Gastrocnemius medialis (tissue), 4 donors: ENCODE measurements at regions of chr9 and their contacts with region 1.

Region 1: GRCh38 chr9:124932333-124932732 is 8.6 kb downstream of the GOLGA1 start:
- DNase-seq: no peak
- ATAC-seq: no peak
- H3K4me3 ChIP-seq: no peak overlapping the region
- H3K27ac ChIP-seq: no peak overlapping the region
- H3K4me1 ChIP-seq: no peaks in the 10 kb centered on the region
- H3K27me3 ChIP-seq: no peaks in the 10 kb centered on the region
- CTCF ChIP-seq: no peak
- POLR2A ChIP-seq: no peak

Region 2: DNA sequence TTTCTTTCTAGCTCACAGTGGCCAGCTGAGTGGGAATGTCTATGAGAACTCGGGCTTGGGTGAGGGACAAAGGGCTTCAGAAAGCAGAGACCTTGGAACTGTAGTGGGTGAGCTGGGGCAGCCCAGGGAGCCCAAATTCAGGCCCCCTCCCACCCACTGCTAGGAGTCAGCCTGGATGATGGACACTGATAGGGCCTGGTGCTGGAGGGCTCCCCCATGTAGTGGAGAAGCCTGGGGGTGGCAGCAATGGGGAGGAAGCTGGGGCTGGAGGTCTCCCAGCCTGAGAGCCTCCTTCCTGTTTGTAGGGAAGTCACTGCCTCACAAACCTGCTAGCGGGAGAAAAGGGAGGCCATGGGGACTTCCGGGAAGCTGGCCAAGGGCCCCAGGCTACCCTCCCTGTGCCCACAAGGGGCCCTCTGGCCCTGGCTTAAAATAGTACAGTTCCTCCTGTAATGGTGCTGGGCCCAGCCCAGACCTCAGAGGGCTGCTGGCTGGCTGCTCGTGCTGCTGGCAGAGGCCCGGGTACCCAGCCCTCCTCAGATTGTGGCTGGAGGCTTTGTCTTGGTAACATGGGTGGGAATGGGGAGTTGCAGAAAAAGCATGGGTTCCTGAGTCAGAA is 418.8 kb before region 1 on chr9:
- in situ Hi-C with region 1: no loop called
- intact Hi-C with region 1: no loop called
- DNase-seq: no peak
- ATAC-seq: no peak
- H3K4me3 ChIP-seq: no peak overlapping the region
- H3K27ac ChIP-seq: no peak overlapping the region
- H3K4me1 ChIP-seq: no peaks in the 10 kb centered on the region
- H3K27me3 ChIP-seq: no peaks in the 10 kb centered on the region
- CTCF ChIP-seq: no peak
- POLR2A ChIP-seq: no peak

Region 3: GRCh38 chr9:124964604-124965003 is 32.3 kb after region 1 on chr9:
- in situ Hi-C with region 1: no loop called
- intact Hi-C with region 1: loop called (anchors 1 kb)
- DNase-seq: no peak
- ATAC-seq: no peak
- H3K4me3 ChIP-seq: no peak overlapping the region
- H3K27ac ChIP-seq: no peak overlapping the region
- H3K4me1 ChIP-seq: peaks cover 0 to 3% of the 10 kb centered on the region in 2 donors
- H3K27me3 ChIP-seq: no peaks in the 10 kb centered on the region
- CTCF ChIP-seq: no peak
- POLR2A ChIP-seq: no peak

Region 4: GRCh38 chr9:125028038-125028437 is 95.7 kb after region 1 on chr9:
- in situ Hi-C with region 1: no loop called
- intact Hi-C with region 1: no loop called
- DNase-seq: no peak
- ATAC-seq: no peak
- H3K4me3 ChIP-seq: no peak overlapping the region
- H3K27ac ChIP-seq: no peak overlapping the region
- H3K4me1 ChIP-seq: no peaks in the 10 kb centered on the region
- H3K27me3 ChIP-seq: no peaks in the 10 kb centered on the region
- CTCF ChIP-seq: no peak
- POLR2A ChIP-seq: no peak